PC-9 (cell line): ENCODE measurements at regions of chr7 and their contacts with region 1.

Region 1: DNA sequence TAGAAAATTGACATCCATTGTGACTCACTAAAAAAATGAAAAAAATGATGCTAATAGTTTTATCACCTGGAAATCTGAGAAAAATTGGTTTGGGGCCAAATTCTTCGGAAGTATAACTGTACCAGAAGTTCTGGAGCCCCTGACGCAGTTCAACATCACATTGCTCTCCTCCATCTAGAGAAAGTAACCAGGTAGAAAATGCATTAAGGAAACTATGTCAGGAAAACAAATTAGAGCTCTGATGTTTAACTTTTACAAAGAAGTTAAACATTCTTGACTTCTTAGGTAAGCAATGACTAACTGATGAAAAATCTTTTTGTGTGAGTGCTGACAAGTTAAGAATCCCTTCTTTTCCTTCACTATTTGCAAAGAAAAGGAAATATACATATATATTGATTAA is 61.1 kb upstream of the TMEM196 start:
- DNase-seq: peak; percentile 34 to 56
- H3K4me3 ChIP-seq: no peak overlapping the region
- H3K27ac ChIP-seq: no peak overlapping the region
- H3K4me1 ChIP-seq: no peaks in the 10 kb centered on the region; the same call in 1 of the 2 replicates
- H3K27me3 ChIP-seq: no peaks in the 10 kb centered on the region
- CTCF ChIP-seq: no peak

Region 2: DNA sequence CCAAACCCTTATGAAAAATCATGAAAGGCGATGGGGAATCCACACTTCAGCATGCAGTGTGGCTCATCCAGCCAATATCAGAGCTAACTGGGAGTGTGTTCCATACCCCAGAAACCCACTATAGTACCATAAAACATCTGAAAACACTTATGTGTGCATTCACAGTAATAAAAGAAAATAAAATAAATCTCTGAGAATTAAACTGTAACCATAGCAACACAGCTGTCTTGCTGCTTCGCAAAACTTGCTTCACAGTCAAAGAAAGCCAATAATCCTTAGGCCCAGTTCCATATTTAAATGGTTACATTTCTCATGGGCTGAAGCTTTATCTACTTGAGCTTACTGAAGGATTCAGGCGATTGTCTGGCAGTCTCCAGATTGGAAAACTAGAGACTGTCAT is 105.8 kb before region 1 on chr7:
- CTCF ChIA-PET with region 1: no interaction called
- POLR2A ChIA-PET with region 1: no interaction called
- intact Hi-C with region 1: no loop called
- DNase-seq: no peak
- H3K4me3 ChIP-seq: no peak overlapping the region
- H3K27ac ChIP-seq: no peak overlapping the region
- H3K4me1 ChIP-seq: no peaks in the 10 kb centered on the region
- H3K27me3 ChIP-seq: no peaks in the 10 kb centered on the region
- CTCF ChIP-seq: no peak

Region 3: DNA sequence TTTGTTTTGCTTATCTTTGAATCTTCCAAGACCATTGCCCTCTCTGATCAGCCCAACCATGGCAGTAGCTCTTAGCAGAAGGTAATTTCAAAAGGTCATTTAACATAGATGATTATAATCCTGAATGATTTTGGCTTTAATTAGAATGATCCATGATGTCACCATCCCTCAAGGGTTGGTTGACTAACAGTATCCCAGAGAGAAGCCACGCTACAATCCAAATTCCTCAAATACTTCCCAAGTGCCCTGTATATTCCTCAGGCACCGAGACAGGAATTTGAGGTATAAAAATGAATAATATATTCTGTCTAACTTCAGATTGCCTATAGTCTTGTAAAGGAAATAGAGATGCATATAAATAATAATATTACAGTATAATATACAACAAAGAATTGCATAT is 19.0 kb before region 1 on chr7:
- CTCF ChIA-PET with region 1: no interaction called
- POLR2A ChIA-PET with region 1: no interaction called
- intact Hi-C with region 1: no loop called
- DNase-seq: no peak
- H3K4me3 ChIP-seq: no peak overlapping the region
- H3K27ac ChIP-seq: no peak overlapping the region
- H3K4me1 ChIP-seq: no peaks in the 10 kb centered on the region
- H3K27me3 ChIP-seq: no peaks in the 10 kb centered on the region
- CTCF ChIP-seq: no peak

Region 4: GRCh38 chr7:19852192-19852591 is 17.6 kb after region 1 on chr7:
- CTCF ChIA-PET with region 1: no interaction called
- POLR2A ChIA-PET with region 1: no interaction called
- intact Hi-C with region 1: no loop called
- DNase-seq: no peak
- H3K4me3 ChIP-seq: no peak overlapping the region
- H3K27ac ChIP-seq: no peak overlapping the region
- H3K4me1 ChIP-seq: no peaks in the 10 kb centered on the region
- H3K27me3 ChIP-seq: no peaks in the 10 kb centered on the region
- CTCF ChIP-seq: no peak

Region 5: DNA sequence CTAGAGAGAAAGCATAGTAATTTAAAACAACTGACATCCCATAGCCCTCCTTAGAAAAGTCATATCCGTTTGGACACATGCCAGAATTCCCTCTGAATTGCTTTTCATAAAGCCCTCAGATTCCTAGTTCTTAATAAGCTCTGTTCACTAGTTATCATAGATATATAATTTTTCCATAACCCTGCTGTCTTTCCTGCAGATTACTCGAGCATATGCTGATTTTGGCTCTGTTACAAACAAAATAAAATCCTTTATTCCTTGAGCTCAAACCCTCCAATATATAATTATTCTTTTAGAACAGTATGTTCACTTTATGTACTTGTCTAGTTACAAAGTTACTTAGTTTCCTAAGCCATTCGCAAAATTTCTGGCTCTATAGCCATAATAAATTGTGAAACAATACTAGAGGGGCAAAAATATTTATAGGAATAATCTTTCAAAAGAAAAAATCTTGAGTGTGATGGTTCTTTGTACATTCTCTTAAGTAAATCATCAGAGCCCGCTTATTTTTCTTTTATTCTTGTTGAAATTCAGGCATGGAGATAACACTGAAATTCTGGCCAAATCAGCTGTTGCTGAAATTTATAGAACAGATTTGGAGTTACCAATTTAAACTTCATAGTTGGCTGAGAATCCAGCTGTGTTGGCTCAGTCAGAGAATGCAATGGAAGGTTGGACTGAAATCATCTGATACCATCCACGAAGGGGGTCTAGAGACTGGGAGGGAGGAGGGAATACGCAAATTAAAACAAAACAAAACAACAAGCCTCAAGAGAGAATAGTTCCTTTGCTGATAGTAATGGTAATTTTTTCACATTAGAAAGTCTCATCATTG is 84.9 kb after region 1 on chr7:
- CTCF ChIA-PET with region 1: no interaction called
- POLR2A ChIA-PET with region 1: no interaction called
- intact Hi-C with region 1: loop called (anchors 10 kb)
- DNase-seq: no peak
- H3K4me3 ChIP-seq: no peak overlapping the region
- H3K27ac ChIP-seq: no peak overlapping the region
- H3K4me1 ChIP-seq: peaks cover 17% of the 10 kb centered on the region
- H3K27me3 ChIP-seq: no peaks in the 10 kb centered on the region
- CTCF ChIP-seq: no peak

Region 6: GRCh38 chr7:20816372-20816959 is 981.9 kb after region 1 on chr7:
- CTCF ChIA-PET with region 1: no interaction called
- POLR2A ChIA-PET with region 1: no interaction called
- intact Hi-C with region 1: no loop called
- DNase-seq: peak in 1 of 2 experiments; percentile 30
- H3K4me3 ChIP-seq: no peak overlapping the region
- H3K27ac ChIP-seq: no peak overlapping the region
- H3K4me1 ChIP-seq: no peaks in the 10 kb centered on the region
- H3K27me3 ChIP-seq: no peaks in the 10 kb centered on the region
- CTCF ChIP-seq: no peak